Activated CD8-positive, alpha-beta T cell treated with anti-CD3 and anti-CD28 coated beads for 36 hours (primary cell): ENCODE measurements at regions of chr1 and their contacts with region 1.

Region 1: GRCh38 chr1:228457396-228458176 is 29.6 kb upstream of the RNF187 start:
- DNase-seq: peak; percentile 94
- ATAC-seq: peak; percentile 88
- H3K4me3 Mint-ChIP-seq: peak overlapping the region; percentile 98
- H3K27ac Mint-ChIP-seq: peak overlapping the region; percentile 98
- H3K4me1 Mint-ChIP-seq: peaks cover 24% of the 10 kb centered on the region
- H3K27me3 Mint-ChIP-seq: peaks cover 2% of the 10 kb centered on the region
- CTCF ChIP-seq: peak; percentile 32

Region 2: GRCh38 chr1:228344631-228345072 is 112.9 kb before region 1 on chr1:
- CTCF ChIA-PET with region 1: no interaction called
- POLR2A ChIA-PET with region 1: no interaction called
- intact Hi-C with region 1: no loop called
- DNase-seq: no peak
- ATAC-seq: no peak
- H3K4me3 Mint-ChIP-seq: no peak overlapping the region
- H3K27ac Mint-ChIP-seq: no peak overlapping the region
- H3K4me1 Mint-ChIP-seq: no peaks in the 10 kb centered on the region
- H3K27me3 Mint-ChIP-seq: no peaks in the 10 kb centered on the region
- CTCF ChIP-seq: no peak

Region 3: DNA sequence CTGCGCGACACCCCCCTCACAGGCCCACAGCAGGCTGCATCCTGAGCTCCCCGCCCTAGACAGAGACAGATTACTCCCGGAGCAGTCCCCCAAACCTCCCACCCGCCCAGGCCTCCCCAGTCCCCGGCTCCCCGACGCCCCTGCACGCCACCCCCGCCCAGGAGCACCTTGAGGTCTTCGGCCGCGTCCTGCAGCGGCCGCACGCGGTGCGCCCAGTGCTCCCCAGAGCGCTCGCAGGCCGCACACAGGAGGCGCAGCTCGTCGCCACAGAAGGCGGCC is 51.7 kb before region 1 on chr1:
- CTCF ChIA-PET with region 1: interaction called, 8 read pairs
- POLR2A ChIA-PET with region 1: interaction called, 22 read pairs
- intact Hi-C with region 1: loop called (anchors 5 kb)
- DNase-seq: peak; percentile 26
- ATAC-seq: peak; percentile 1
- H3K4me3 Mint-ChIP-seq: peak overlapping the region; percentile 98
- H3K27ac Mint-ChIP-seq: peak overlapping the region; percentile 91
- H3K4me1 Mint-ChIP-seq: peaks cover 47% of the 10 kb centered on the region
- H3K27me3 Mint-ChIP-seq: no peaks in the 10 kb centered on the region
- CTCF ChIP-seq: no peak

Region 4: GRCh38 chr1:228471762-228472398 is 14.3 kb after region 1 on chr1:
- CTCF ChIA-PET with region 1: interaction called, 31 read pairs
- POLR2A ChIA-PET with region 1: interaction called, 21 read pairs
- intact Hi-C with region 1: no loop called
- DNase-seq: peak; percentile 45
- ATAC-seq: peak; percentile 81
- H3K4me3 Mint-ChIP-seq: no peak overlapping the region
- H3K27ac Mint-ChIP-seq: peak overlapping the region; percentile 47
- H3K4me1 Mint-ChIP-seq: peaks cover 24% of the 10 kb centered on the region
- H3K27me3 Mint-ChIP-seq: peaks cover 14% of the 10 kb centered on the region
- CTCF ChIP-seq: peak; percentile 71

Region 5: DNA sequence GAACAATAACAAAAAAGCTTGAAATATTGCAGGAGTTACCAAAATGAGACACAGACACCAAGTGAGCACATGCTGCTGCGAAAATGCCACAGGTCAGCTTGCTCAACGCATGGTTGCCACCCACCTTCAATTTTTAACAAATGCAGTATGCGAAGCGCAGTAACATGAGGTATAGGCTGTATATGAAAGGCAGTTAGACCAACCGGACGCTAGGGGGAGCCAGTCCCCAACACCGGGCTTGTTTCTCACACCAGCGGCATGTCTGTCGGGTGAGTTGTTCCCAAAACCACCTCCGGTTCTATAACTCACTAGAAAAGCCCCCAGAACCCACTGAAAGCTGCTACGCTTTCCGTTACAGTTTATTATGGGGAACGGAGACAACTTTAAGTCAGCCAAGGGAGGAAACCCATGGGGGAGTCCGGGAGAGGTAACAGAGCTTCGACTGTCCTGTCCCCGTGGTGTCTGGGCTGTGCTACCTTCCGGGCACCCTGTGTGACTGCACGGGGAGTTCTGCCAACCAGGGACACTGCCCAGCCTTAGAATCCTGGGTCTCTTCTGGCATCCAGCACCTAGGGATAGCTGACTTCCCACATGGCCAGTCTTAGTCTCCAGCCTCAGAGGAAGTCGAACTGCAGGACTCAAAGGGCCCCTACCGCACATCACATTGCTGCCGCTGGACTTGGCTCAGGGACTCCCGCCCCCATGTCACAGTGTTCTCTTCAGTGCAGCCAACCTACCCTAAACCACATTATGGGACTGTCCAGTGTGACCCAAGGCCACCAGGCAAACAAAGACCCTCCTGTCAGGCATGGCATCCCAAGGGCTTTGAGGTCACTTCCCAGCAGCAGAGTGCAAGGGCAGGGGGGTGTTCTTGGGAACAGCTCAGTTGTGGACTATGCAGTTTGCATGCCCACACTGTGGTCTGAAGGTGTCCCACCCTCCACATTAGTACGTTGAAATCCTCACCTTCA is 43.6 kb after region 1 on chr1:
- CTCF ChIA-PET with region 1: interaction called, 15 read pairs
- POLR2A ChIA-PET with region 1: interaction called, 4 read pairs
- intact Hi-C with region 1: loop called (anchors 5 kb)
- DNase-seq: peak; percentile 98
- ATAC-seq: peak; percentile 97
- H3K4me3 Mint-ChIP-seq: peak overlapping the region; percentile 60
- H3K27ac Mint-ChIP-seq: peak overlapping the region; percentile 66
- H3K4me1 Mint-ChIP-seq: peaks cover 24% of the 10 kb centered on the region
- H3K27me3 Mint-ChIP-seq: peaks cover 2% of the 10 kb centered on the region
- CTCF ChIP-seq: peak; percentile 87

Region 6: GRCh38 chr1:228527596-228527995 is 70.0 kb after region 1 on chr1:
- CTCF ChIA-PET with region 1: no interaction called
- POLR2A ChIA-PET with region 1: no interaction called
- intact Hi-C with region 1: no loop called
- DNase-seq: no peak
- ATAC-seq: no peak
- H3K4me3 Mint-ChIP-seq: no peak overlapping the region
- H3K27ac Mint-ChIP-seq: no peak overlapping the region
- H3K4me1 Mint-ChIP-seq: no peaks in the 10 kb centered on the region
- H3K27me3 Mint-ChIP-seq: peaks cover 24% of the 10 kb centered on the region
- CTCF ChIP-seq: no peak

Region 7: GRCh38 chr1:228782662-228783417 is 325.3 kb after region 1 on chr1:
- CTCF ChIA-PET with region 1: no interaction called
- POLR2A ChIA-PET with region 1: no interaction called
- intact Hi-C with region 1: no loop called
- DNase-seq: no peak
- ATAC-seq: peak; percentile 34
- H3K4me3 Mint-ChIP-seq: no peak overlapping the region
- H3K27ac Mint-ChIP-seq: no peak overlapping the region
- H3K4me1 Mint-ChIP-seq: no peaks in the 10 kb centered on the region
- H3K27me3 Mint-ChIP-seq: no peaks in the 10 kb centered on the region
- CTCF ChIP-seq: no peak